Left cardiac atrium (tissue), 4 donors: ENCODE measurements at regions of chr1 and their contacts with region 1.

Region 1: DNA sequence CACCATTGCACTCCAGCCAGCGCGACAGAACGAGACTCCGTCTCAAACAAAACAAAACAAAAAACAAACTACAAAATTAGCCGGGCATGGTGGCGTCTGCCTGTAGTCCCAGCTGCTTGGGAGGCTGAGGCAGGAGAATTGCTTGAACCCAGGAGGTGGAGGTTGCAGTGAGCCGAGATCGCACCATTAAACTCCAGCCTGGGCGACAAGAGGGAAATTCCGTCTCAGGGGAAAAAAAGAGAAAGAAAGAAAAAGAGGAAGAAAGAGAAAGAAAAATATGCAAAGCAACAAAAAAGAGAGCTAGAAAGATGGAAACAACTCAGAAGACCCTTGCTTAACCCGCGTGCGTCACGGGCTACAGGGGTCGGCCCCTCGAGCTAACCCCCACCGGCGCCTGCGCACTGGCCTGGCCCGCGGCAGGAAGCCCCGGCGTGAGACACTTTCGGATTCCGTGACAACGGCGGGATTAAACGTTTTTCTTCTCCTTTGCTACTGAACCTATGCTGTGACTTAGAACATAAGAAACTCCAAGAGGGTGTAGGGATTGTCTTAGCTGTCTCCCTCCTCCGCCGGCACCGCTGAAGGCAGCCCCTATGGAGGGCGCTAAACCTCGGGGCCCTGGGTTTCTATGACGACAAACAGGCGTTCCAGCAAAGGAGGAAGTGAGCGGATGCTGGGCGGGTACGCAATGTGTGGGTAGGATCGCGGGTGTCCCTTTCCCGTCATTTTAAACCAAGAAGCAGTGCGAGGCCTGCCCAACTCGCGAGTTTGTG is at the start of gene AXDND1:
- DNase-seq: peak; percentile 90
- ATAC-seq: peak; percentile 96 to 98
- total RNA-seq, gene AXDND1: 0.44 TPM in 1 of 2 donors, not detected in the other

Region 2: GRCh38 chr1:179081687-179082332 is 283.7 kb before region 1 on chr1 and contains the start of gene TOR3A:
- intact Hi-C with region 1: loop called (anchors 2 to 10 kb)
- DNase-seq: peak; percentile 94
- ATAC-seq: peak; percentile 97 to 98
- total RNA-seq, gene TOR3A: 12.7 to 12.9 TPM

Region 3: DNA sequence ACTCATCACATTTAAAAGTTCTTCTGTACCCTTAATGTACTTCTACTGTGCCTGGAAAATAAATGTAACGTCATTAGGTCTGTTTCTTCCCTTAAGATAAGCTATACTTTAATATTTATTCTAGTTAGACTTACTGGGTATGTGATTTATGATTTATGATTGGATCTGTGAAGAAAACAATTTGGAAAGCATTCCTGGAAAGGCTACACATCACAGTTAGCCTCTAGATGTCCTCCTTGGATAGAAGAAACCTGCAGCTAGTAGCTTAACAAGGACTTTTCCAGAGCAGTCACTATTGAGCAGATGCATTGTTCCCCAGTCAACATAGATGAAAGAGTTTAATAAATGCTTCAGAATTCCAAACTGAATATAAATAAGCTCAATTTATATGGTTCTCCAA is 113.8 kb before region 1 on chr1:
- intact Hi-C with region 1: loop called (anchors 5 to 10 kb)
- DNase-seq: no peak
- ATAC-seq: peak; percentile 65 to 68

Region 4: GRCh38 chr1:179809506-179810366 is 444.2 kb after region 1 on chr1:
- intact Hi-C with region 1: loop called in 1 of 2 experiments (anchors 10 kb)
- DNase-seq: peak; percentile 61
- ATAC-seq: peak; percentile 35 to 53

Region 5: DNA sequence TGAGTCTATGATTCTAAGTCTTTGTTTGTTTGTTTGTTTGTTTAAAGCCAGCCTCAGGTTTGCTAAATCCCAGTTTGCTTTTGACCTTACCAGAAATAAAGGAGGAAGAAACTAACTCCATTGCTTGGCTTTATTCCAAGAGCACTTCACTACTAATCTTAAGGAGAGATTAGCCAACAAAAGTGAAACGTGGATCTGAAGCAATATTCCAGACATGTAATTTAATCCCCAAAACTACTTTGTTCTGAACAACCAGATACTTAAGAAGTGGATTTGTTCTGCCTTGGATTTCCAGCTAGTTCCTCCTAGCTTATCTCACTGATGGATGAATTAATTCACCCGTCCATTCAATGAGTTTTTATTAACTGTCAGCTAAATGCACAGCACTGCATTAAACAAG is 573.2 kb after region 1 on chr1:
- intact Hi-C with region 1: no loop called
- DNase-seq: no peak
- ATAC-seq: no peak